ENCODE measurements at regions of chr15 and their contacts with region 1.

Region 1: GRCh38 chr15:45221967-45222366 is 30.1 kb upstream of the SLC28A2 start:
- DNase-seq: no peak
- ATAC-seq: no peak
- H3K4me3 ChIP-seq: no peak overlapping the region
- H3K27ac ChIP-seq: no peak overlapping the region
- H3K4me1 ChIP-seq: peaks cover 21% of the 10 kb centered on the region
- H3K27me3 ChIP-seq: no peaks in the 10 kb centered on the region
- CTCF ChIP-seq: no peak
- POLR2A ChIP-seq: no peak

Region 2: DNA sequence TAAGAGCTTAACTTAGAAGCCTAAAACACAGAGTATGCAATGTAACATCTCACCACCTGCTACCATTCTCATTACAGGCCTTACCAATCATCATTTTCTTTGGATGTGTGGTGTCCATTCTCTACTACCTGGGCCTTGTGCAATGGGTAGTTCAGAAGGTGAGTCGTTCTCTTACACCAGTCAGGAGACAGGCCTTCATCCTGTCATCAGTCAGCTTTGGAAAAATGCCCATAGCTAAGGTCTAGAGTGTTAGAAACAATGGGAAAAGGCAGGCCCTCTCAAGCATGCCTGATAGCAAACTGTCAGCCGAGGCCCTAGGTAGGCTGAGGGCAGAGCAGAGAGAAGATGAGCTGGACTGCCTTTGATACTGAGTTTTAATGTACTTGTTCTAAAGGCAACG is 43.5 kb after region 1 on chr15:
- intact Hi-C with region 1: loop called (anchors 2 kb)
- DNase-seq: no peak
- ATAC-seq: no peak
- H3K4me3 ChIP-seq: no peak overlapping the region
- H3K27ac ChIP-seq: no peak overlapping the region
- H3K4me1 ChIP-seq: no peaks in the 10 kb centered on the region
- H3K27me3 ChIP-seq: no peaks in the 10 kb centered on the region
- CTCF ChIP-seq: no peak
- POLR2A ChIP-seq: no peak

Region 3: DNA sequence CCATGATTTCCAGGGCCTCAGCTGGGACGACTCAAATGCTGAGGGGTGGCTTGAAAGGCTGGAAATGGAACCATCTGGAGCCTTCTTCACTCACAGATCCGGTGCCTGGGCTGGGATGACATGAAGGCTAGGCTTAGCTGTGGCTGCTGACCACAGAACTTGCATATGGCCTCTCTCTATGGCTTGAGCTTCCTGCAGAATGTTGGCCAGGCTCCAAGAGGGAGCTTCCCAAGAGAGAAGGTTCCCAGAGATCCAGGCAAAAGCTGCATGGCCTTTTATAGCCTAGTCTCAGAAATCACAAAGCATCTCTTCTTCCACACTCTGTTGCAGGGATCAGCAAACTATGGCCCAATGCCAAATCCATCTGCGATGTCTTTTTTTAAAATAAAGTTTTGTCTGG is 111.6 kb after region 1 on chr15:
- intact Hi-C with region 1: no loop called
- DNase-seq: peak in 3 of 4 donors; percentile 46 to 56 (median 46)
- ATAC-seq: no peak
- H3K4me3 ChIP-seq: no peak overlapping the region
- H3K27ac ChIP-seq: peak overlapping the region in 3 of 4 donors; percentile 68 to 84 (median 83)
- H3K4me1 ChIP-seq: peaks cover 73% of the 10 kb centered on the region
- H3K27me3 ChIP-seq: no peaks in the 10 kb centered on the region
- CTCF ChIP-seq: no peak
- POLR2A ChIP-seq: no peak